ENCODE measurements at regions of chr1 and their contacts with region 1.

Region 1: DNA sequence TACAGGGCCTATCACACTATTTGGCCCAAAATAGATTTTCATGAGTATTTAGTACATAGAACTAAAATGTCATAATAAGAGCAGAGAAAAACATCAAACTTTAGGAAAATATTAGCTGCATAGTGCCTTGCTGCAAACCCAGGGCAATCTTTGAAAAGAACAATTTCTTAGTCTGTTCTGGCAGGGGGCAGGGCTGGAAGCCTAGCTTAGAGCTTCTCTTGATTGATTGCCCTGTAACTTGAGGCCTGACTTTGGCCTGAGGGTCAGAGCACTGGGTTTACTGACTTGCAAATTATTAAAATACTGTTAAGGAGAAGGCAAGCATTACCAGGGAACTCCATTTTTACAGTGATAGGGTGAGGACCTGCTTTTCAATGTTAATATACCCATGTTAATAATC is 115.8 kb upstream of the SPAG17 start:
- DNase-seq: no peak

Region 2: DNA sequence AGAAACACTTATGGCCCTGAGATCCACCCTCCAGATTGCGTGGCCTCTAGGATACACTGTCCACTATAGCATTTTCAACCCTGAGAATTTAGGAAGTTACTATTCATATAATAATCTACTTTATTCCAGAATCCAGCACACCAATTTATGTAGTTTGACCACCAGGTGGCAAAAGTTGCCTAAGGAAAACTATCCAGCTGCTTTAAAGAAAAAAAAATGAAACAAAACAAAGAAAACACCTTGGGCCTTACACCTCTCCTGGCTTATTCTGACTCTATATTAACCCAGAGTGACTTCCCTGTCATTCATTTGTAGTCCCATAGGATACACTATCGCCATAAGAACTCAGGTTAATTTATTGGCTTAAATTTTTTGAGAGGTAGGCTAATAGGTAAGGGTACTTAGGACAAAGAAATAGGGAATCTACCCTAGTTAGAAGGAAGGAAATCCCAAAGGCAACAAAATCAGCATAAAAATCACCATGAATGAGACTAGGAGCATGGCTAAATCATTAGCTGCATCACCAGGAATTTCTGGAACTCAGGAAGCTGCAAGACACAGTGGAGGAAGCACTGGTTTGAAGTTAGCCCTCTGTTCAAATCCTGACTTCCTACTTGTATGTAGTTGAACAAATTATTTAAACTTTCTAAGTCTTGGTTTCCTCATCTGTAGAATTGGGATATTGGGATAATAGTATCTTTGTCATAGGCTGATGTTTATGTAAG is 223.3 kb before region 1 on chr1:
- intact Hi-C with region 1: no loop called
- DNase-seq: no peak

Region 3: GRCh38 chr1:118264343-118264742 is 36.5 kb before region 1 on chr1:
- intact Hi-C with region 1: loop called in 1 of 2 experiments (anchors 1 kb)
- DNase-seq: no peak

Measured in posterior vena cava (tissue), 2 donors.